Activated CD4-positive, alpha-beta memory T cell treated with anti-CD3 and anti-CD28 coated beads for 36 hours (primary cell): ENCODE measurements at regions of chr6 and their contacts with region 1.

Region 1: GRCh38 chr6:43263314-43264178 is 20.3 kb downstream of the TTBK1 start:
- DNase-seq: peak; percentile 86
- H3K4me3 Mint-ChIP-seq: no peak overlapping the region
- H3K27ac Mint-ChIP-seq: peak overlapping the region; percentile 24
- H3K4me1 Mint-ChIP-seq: peaks cover 2% of the 10 kb centered on the region
- H3K27me3 Mint-ChIP-seq: no peaks in the 10 kb centered on the region

Region 2: GRCh38 chr6:43355862-43356590 is 92.5 kb after region 1 on chr6:
- CTCF ChIA-PET with region 1: interaction called, 10 read pairs
- POLR2A ChIA-PET with region 1: no interaction called
- intact Hi-C with region 1: no loop called
- DNase-seq: no peak
- H3K4me3 Mint-ChIP-seq: no peak overlapping the region
- H3K27ac Mint-ChIP-seq: no peak overlapping the region
- H3K4me1 Mint-ChIP-seq: peaks cover 10% of the 10 kb centered on the region
- H3K27me3 Mint-ChIP-seq: no peaks in the 10 kb centered on the region

Region 3: DNA sequence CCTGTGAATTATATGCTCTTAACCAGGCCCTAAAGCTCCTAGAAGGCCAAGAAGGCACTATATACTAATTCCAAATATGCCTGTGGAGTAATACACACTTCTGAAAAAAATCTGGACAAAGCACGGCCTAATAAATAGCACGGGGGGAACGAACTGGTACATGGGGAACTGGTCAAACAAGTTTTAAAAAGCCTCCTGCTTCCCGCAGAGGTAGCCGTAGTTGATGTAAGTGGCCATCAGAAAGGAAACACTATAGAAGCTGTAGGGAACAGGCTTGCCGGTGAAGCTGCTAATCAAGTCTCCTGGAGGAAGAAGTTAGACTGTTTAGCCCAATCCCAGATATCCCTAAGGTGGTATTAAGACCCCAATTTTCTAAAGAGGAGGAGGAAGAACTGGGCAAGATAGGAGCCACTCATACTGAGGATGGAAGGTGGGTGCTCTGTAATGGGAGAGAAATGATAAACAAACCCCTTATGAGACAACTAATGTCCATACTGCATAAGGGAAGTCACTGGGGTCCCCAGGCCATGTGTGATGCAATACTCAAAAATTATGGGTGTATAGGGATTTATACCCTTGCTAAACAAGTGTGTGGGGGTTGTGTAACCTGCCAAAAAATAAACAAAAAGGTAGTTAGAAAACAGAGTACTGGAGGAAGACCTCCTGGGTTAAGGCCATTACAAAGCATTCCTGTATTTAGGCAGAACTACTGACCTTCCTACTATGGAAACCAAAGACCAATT is 133.0 kb after region 1 on chr6:
- CTCF ChIA-PET with region 1: interaction called, 11 read pairs
- POLR2A ChIA-PET with region 1: no interaction called
- intact Hi-C with region 1: loop called (anchors 1 kb)
- DNase-seq: no peak
- H3K4me3 Mint-ChIP-seq: no peak overlapping the region
- H3K27ac Mint-ChIP-seq: no peak overlapping the region
- H3K4me1 Mint-ChIP-seq: peaks cover 7% of the 10 kb centered on the region
- H3K27me3 Mint-ChIP-seq: no peaks in the 10 kb centered on the region

Region 4: DNA sequence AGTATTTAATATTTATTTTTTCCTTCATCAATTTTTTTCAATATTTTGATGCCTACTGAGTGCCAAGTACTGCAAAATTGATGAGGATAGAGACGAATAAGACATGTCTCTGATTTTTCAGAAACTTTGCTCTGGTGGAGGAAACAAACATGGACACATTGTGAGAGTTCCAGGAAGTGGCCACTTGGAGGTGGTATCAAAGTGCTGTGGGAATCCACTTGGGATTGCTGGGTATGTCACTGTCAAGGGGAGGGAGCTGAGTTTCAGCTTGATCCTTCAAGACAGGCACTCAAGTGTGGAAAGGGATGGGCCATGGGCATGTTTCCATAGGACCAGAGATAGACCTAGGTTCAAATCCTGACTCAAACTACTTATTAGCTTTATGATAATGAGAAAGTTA is 139.3 kb after region 1 on chr6:
- CTCF ChIA-PET with region 1: interaction called, 11 read pairs
- POLR2A ChIA-PET with region 1: no interaction called
- intact Hi-C with region 1: loop called (anchors 1 kb)
- DNase-seq: no peak
- H3K4me3 Mint-ChIP-seq: no peak overlapping the region
- H3K27ac Mint-ChIP-seq: no peak overlapping the region
- H3K4me1 Mint-ChIP-seq: peaks cover 1% of the 10 kb centered on the region
- H3K27me3 Mint-ChIP-seq: no peaks in the 10 kb centered on the region

Region 5: DNA sequence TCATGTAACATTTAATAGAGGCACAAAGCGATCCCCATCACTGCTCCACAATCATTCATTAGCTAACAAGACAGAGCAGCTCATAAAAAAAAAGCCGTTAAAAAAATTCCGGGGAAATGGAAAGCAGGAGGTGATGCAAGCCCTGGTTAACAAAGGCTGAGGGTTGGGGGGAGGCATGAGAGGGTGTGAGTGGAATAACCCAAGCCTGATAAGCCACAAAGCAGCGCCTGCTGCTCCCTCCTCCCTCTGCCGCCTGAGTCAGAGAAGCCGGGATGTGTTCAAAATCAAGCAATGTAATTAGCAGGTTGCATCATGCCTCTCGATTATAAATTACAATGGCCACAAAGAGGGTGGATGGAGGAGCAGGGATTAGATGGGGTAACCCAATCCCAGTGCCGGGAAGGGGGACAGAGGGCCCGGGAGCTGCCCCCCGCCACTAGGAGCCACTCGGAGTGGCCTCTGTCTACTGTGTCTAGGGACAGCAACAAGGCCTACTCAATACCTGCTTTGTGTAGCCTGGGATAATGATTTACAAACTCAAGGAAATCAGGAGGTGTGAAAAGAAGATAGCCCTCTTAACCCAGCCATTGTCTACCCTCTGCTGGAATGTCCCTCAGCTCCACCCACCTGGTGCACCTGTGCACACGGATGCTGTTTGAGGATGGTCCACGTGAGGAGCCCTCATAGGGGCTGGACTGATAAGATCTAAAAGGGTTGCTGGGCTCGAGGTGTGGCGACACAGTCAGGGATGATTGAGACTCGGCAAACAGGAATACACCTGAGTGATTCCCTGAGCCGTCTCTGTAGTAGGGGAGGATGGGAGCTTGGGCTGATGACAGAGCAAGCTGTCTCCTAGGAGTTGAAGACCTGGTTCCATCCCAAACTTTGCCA is 663.3 kb after region 1 on chr6:
- CTCF ChIA-PET with region 1: no interaction called
- POLR2A ChIA-PET with region 1: no interaction called
- intact Hi-C with region 1: no loop called
- DNase-seq: no peak
- H3K4me3 Mint-ChIP-seq: no peak overlapping the region
- H3K27ac Mint-ChIP-seq: no peak overlapping the region
- H3K4me1 Mint-ChIP-seq: peaks cover 25% of the 10 kb centered on the region
- H3K27me3 Mint-ChIP-seq: no peaks in the 10 kb centered on the region